ENCODE measurements at regions of chr6 and their contacts with region 1.

Region 1: DNA sequence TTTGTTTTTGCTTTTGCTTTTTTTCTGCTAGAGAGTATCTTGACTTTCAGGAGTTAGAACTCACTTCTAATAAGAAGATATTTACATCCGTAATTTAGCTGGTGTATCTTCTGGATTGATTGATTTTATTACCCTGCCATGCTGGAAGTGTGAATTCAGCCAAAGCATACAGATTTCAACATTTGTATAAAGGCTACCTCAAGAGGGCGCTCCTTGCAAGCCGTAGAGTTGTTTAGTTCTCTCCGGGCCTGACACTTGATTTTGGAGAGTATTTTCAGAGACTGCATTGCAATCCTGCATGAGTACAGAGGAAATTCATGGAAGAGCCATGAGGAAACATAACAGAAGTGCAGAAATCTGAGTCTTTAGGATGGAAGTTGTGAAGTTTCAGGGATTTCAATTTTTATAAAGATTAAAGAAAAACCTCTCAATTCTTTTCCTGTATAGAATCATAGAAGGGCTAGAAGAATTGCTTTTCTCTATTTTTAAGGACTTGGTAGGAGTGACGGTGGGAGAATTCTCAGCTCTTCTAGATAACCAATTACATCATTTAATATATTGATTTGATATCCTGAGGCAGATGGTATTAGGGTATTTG is 66.7 kb upstream of the TIAM2 start:
- DNase-seq: peak in 8 of 9 donors; percentile 7 to 55 (median 43)
- ATAC-seq: peak; percentile 57
- H3K4me3 ChIP-seq: no peak overlapping the region
- H3K4me3 Mint-ChIP-seq: no peak overlapping the region
- H3K27ac ChIP-seq: no peak overlapping the region
- H3K27ac Mint-ChIP-seq: no peak overlapping the region
- H3K4me1 ChIP-seq: no peaks in the 10 kb centered on the region
- H3K4me1 Mint-ChIP-seq: peaks cover 0 to 17% (median 8%) of the 10 kb centered on the region in 7 donors
- H3K27me3 ChIP-seq: no peaks in the 10 kb centered on the region
- H3K27me3 Mint-ChIP-seq: no peaks in the 10 kb centered on the region

Region 2: DNA sequence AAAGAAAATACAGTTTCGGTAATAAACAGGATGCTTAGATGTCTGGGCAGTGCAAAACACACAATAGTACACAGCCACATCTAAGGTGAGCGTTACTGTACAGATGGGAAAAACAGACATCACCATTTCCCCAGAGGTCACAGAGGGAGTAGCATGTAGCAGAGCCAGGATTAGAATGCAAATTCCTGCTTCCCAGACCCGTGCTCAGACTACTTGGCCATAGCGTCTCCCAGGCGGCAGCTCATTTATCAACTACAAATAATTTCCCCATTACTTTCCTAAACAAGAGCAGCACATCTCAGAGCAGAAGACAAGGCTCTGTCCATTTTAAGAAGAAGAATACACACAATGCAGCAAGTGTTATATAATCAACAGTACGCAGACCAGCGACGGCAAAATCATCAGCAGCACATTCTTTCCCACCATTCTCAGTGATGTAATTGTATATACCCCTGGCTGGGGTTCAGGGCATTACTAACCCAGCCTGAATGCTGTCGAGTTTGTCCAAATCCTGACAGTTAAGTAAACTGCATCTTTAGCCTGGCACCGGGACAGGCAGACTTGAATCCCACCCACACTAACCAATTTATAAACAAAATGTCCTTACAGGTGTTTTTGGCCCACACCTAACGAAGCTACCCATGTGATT is 479.9 kb before region 1 on chr6:
- CTCF ChIA-PET with region 1: no interaction called
- POLR2A ChIA-PET with region 1: no interaction called
- intact Hi-C with region 1: no loop called
- DNase-seq: no peak
- ATAC-seq: no peak
- H3K4me3 ChIP-seq: no peak overlapping the region
- H3K4me3 Mint-ChIP-seq: no peak overlapping the region
- H3K27ac ChIP-seq: no peak overlapping the region
- H3K27ac Mint-ChIP-seq: no peak overlapping the region
- H3K4me1 ChIP-seq: no peaks in the 10 kb centered on the region
- H3K4me1 Mint-ChIP-seq: peaks cover 0 to 7% (median 0%) of the 10 kb centered on the region in 7 donors
- H3K27me3 ChIP-seq: no peaks in the 10 kb centered on the region
- H3K27me3 Mint-ChIP-seq: peaks cover 0 to 3% (median 0%) of the 10 kb centered on the region in 5 donors

Region 3: GRCh38 chr6:154995284-154996015 is 67.0 kb after region 1 on chr6 and contains the start of gene TIAM2:
- CTCF ChIA-PET with region 1: no interaction called
- POLR2A ChIA-PET with region 1: no interaction called
- intact Hi-C with region 1: loop called in 1 of 2 experiments (anchors 5 kb)
- DNase-seq: peak in 1 of 9 donors; percentile 68
- ATAC-seq: no peak
- H3K4me3 ChIP-seq: no peak within 1 kb of the TSS
- H3K4me3 Mint-ChIP-seq: peak within 1 kb of the TSS in 7 of 10 donors; percentile 25 to 65 (median 46)
- H3K27ac ChIP-seq: no peak within 1 kb of the TSS
- H3K27ac Mint-ChIP-seq: no peak within 1 kb of the TSS
- H3K4me1 ChIP-seq: no peaks in the 10 kb centered on the region
- H3K4me1 Mint-ChIP-seq: peaks cover 0 to 13% (median 5%) of the 10 kb centered on the region in 7 donors
- H3K27me3 ChIP-seq: no peaks in the 10 kb centered on the region
- H3K27me3 Mint-ChIP-seq: peaks cover 27 to 40% (median 37%) of the 10 kb centered on the region in 5 donors
- total RNA-seq, gene TIAM2: 3.6 to 11.6 (median 8.6) TPM

Region 4: DNA sequence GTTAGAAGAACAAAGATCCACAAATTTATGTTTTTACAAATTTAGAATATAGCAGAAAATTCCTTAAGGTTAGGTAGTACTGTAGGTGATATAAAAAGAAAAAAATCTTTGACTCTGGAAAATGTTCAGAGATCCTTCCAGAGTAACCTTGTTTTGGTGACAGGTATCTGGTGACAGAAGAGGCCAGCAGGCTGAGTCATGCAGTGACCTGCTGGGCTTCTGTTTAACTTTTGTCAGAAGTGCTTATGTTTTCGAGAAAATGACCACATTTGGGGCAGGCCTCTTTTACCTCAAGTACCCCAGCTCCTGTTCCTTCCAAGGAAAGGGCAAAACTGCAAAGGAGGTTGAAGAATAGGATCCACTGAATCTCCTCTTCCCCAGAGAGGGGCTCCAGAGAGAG is 324.9 kb after region 1 on chr6:
- CTCF ChIA-PET with region 1: interaction called, 3 read pairs
- POLR2A ChIA-PET with region 1: no interaction called
- intact Hi-C with region 1: loop called in 1 of 2 experiments (anchors 5 kb)
- DNase-seq: no peak
- ATAC-seq: no peak
- H3K4me3 ChIP-seq: no peak overlapping the region
- H3K4me3 Mint-ChIP-seq: no peak overlapping the region
- H3K27ac ChIP-seq: no peak overlapping the region
- H3K27ac Mint-ChIP-seq: peak overlapping the region in 5 of 9 donors; percentile 15 to 63 (median 35)
- H3K4me1 ChIP-seq: no peaks in the 10 kb centered on the region
- H3K4me1 Mint-ChIP-seq: peaks cover 0 to 3% (median 0%) of the 10 kb centered on the region in 7 donors
- H3K27me3 ChIP-seq: no peaks in the 10 kb centered on the region
- H3K27me3 Mint-ChIP-seq: no peaks in the 10 kb centered on the region

Region 5: DNA sequence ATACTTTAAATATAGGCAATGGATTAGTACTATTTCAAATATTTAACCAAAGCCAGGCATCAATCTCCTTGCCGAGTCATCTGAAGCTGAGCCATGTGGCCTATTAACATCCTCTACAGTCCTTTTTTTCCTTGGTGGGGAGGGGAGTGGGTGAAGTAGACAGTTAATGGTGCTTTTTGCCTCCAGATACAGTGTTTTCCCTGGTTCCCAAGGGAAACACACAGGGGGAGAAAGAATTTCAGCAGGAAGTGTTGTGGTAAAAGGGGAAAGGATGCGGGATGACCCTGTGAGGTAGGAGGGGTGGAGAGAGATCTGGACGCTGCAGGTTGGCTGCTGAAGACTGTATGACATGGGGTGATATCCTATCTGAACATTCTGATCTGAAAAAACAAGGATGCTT is 345.0 kb after region 1 on chr6:
- CTCF ChIA-PET with region 1: no interaction called
- POLR2A ChIA-PET with region 1: no interaction called
- intact Hi-C with region 1: loop called (anchors 2 to 10 kb)
- DNase-seq: no peak
- ATAC-seq: no peak
- H3K4me3 ChIP-seq: no peak overlapping the region
- H3K4me3 Mint-ChIP-seq: no peak overlapping the region
- H3K27ac ChIP-seq: no peak overlapping the region
- H3K27ac Mint-ChIP-seq: peak overlapping the region in 3 of 9 donors; percentile 46 to 62 (median 54)
- H3K4me1 ChIP-seq: peaks cover 0 to under 1% of the 10 kb centered on the region in 2 donors
- H3K4me1 Mint-ChIP-seq: peaks cover 7 to 50% (median 18%) of the 10 kb centered on the region in 7 donors
- H3K27me3 ChIP-seq: no peaks in the 10 kb centered on the region
- H3K27me3 Mint-ChIP-seq: no peaks in the 10 kb centered on the region

Region 6: GRCh38 chr6:155530219-155530834 is 601.9 kb after region 1 on chr6:
- CTCF ChIA-PET with region 1: no interaction called
- POLR2A ChIA-PET with region 1: no interaction called
- intact Hi-C with region 1: loop called in 1 of 2 experiments (anchors 10 kb)
- DNase-seq: peak in 5 of 9 donors; percentile 22 to 40 (median 30)
- ATAC-seq: no peak
- H3K4me3 ChIP-seq: no peak overlapping the region
- H3K4me3 Mint-ChIP-seq: no peak overlapping the region
- H3K27ac ChIP-seq: no peak overlapping the region
- H3K27ac Mint-ChIP-seq: no peak overlapping the region
- H3K4me1 ChIP-seq: no peaks in the 10 kb centered on the region
- H3K4me1 Mint-ChIP-seq: peaks cover 0 to 10% (median 7%) of the 10 kb centered on the region in 7 donors
- H3K27me3 ChIP-seq: no peaks in the 10 kb centered on the region
- H3K27me3 Mint-ChIP-seq: peaks cover 0 to 11% (median 0%) of the 10 kb centered on the region in 5 donors